OCI-LY7 (cell line): ENCODE measurements at regions of chr12 and their contacts with region 1.

Region 1: GRCh38 chr12:8465306-8465996 is 9.7 kb downstream of the CLEC6A start:
- DNase-seq: no peak
- H3K4me3 ChIP-seq: no peak overlapping the region
- H3K27ac ChIP-seq: no peak overlapping the region
- H3K4me1 ChIP-seq: no peaks in the 10 kb centered on the region
- CTCF ChIP-seq: no peak

Region 2: GRCh38 chr12:8519171-8519570 is 53.7 kb after region 1 on chr12:
- CTCF ChIA-PET with region 1: no interaction called
- POLR2A ChIA-PET with region 1: no interaction called
- intact Hi-C with region 1: loop called (anchors 5 kb)
- DNase-seq: no peak
- H3K4me3 ChIP-seq: no peak overlapping the region
- H3K27ac ChIP-seq: no peak overlapping the region
- H3K4me1 ChIP-seq: no peaks in the 10 kb centered on the region
- CTCF ChIP-seq: no peak

Region 3: DNA sequence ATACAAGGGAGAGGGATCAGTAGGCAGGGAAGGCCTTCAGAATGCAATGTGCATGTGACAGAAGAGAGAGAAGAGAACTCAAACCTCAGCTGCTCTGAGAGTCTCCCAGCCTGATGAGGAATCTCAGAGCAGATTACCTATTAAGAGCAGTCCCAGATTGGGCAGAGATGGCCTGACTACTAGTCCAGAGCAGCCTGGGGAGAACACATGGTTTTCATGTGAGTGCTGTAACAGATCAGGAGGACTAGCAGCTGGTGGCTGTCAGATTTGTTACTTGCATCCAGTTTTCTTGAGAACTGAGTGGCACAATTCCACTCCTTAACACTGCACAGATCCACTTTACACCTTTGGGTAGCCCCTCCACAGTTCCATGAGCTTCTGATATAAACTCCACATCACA is 319.0 kb after region 1 on chr12:
- CTCF ChIA-PET with region 1: no interaction called
- POLR2A ChIA-PET with region 1: no interaction called
- intact Hi-C with region 1: no loop called
- DNase-seq: no peak
- H3K4me3 ChIP-seq: no peak overlapping the region
- H3K27ac ChIP-seq: no peak overlapping the region
- H3K4me1 ChIP-seq: no peaks in the 10 kb centered on the region
- CTCF ChIP-seq: no peak